H1 (cell line): ENCODE measurements at regions of chr11 and their contacts with region 1.

Region 1: GRCh38 chr11:118295834-118296454 is 8.6 kb upstream of the CD3E start:
- DNase-seq: no peak
- H3K4me3 ChIP-seq: no peak overlapping the region
- H3K27ac ChIP-seq: no peak overlapping the region
- H3K4me1 ChIP-seq: no peaks in the 10 kb centered on the region; a peak in 1 of 7 replicates
- H3K27me3 ChIP-seq: no peaks in the 10 kb centered on the region; a peak in 1 of 7 replicates
- CTCF ChIP-seq: peak in 2 of 3 experiments; percentile 63 to 70; a peak in 3 of 4 replicates
- EP300 ChIP-seq: no peak
- POLR2A ChIP-seq: no peak
- RAD21 ChIP-seq: peak; percentile 54 to 65

Region 2: GRCh38 chr11:118033443-118033842 is 262.5 kb before region 1 on chr11:
- CTCF ChIA-PET with region 1: no interaction called
- POLR2A ChIA-PET with region 1: no interaction called
- DNase-seq: no peak
- H3K4me3 ChIP-seq: no peak overlapping the region
- H3K27ac ChIP-seq: no peak overlapping the region
- H3K4me1 ChIP-seq: no peaks in the 10 kb centered on the region
- H3K27me3 ChIP-seq: no peaks in the 10 kb centered on the region
- CTCF ChIP-seq: no peak
- EP300 ChIP-seq: no peak
- POLR2A ChIP-seq: no peak
- RAD21 ChIP-seq: no peak

Region 3: DNA sequence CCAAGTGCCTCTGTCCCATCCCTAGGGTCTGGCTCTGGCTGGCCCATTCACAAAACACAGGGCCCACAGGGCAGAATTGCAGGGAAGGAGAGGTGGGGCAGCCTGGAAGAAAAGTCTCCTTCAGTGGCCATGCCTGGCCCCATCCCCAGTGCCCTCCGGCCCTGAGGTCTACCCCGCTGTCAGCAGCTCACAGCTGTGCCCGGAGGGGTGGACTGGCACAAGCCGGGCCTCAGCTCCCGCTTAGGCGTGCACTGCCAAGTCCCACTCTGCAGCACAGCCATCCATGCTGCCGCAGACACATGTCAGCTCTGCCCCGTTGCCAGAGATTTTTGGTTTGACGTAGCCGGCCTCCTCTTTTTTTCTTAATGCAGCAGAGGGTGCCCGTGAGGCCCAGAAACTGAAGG is 115.6 kb before region 1 on chr11:
- CTCF ChIA-PET with region 1: interaction called, 10 read pairs
- POLR2A ChIA-PET with region 1: no interaction called
- DNase-seq: peak in 1 of 2 experiments; percentile 77
- H3K4me3 ChIP-seq: peak overlapping the region in 3 of 4 experiments; percentile 8 to 42 (median 10); a peak in 5 of 8 replicates
- H3K27ac ChIP-seq: no peak overlapping the region
- H3K4me1 ChIP-seq: peaks cover 7 to 21% (median 11%) of the 10 kb centered on the region in 4 experiments
- H3K27me3 ChIP-seq: peaks cover 0 to 8% (median 7%) of the 10 kb centered on the region in 4 experiments; a peak in 5 of 7 replicates
- CTCF ChIP-seq: peak in 2 of 3 experiments; percentile 8; a peak in 2 of 4 replicates
- EP300 ChIP-seq: no peak
- POLR2A ChIP-seq: no peak
- RAD21 ChIP-seq: peak; percentile 11 to 19; a peak in 1 of 4 replicates

Region 4: GRCh38 chr11:118258410-118258809 is 37.5 kb before region 1 on chr11:
- CTCF ChIA-PET with region 1: interaction called, 16 read pairs
- POLR2A ChIA-PET with region 1: no interaction called
- DNase-seq: no peak
- H3K4me3 ChIP-seq: no peak overlapping the region
- H3K27ac ChIP-seq: no peak overlapping the region
- H3K4me1 ChIP-seq: peaks cover 0 to 2% (median 0%) of the 10 kb centered on the region in 4 experiments; a peak in 3 of 7 replicates
- H3K27me3 ChIP-seq: peaks cover 1 to 11% (median 8%) of the 10 kb centered on the region in 4 experiments; a peak in 6 of 7 replicates
- CTCF ChIP-seq: peak in 2 of 3 experiments; percentile 11 to 41; a peak in 2 of 4 replicates
- EP300 ChIP-seq: no peak
- POLR2A ChIP-seq: no peak
- RAD21 ChIP-seq: peak; percentile 24 to 40

Region 5: DNA sequence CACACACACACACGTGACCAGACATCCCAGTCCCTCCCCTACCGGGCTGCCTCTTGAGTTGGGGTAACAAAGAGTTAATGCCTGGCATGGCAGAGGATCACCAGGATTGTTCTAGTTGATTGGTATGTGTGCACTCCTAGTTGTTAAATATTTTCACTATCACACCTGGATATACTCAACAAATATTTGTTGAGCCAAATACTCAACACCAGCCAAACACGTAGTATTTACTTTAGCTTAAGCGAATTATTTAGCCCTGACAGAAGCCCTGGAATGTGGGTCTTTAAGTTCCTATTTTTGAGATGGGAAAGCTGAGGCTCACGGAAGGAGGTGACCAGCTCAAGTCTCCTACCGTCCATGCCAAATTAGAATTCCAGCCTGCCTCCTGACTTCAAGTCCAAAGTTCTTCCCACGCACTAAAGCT is 19.1 kb after region 1 on chr11:
- CTCF ChIA-PET with region 1: interaction called, 11 read pairs
- POLR2A ChIA-PET with region 1: interaction called, 3 read pairs
- DNase-seq: no peak
- H3K4me3 ChIP-seq: peak overlapping the region in 3 of 4 experiments; percentile 16 to 48 (median 28); a peak in 5 of 8 replicates
- H3K27ac ChIP-seq: no peak overlapping the region
- H3K4me1 ChIP-seq: peaks cover 7 to 11% (median 7%) of the 10 kb centered on the region in 4 experiments
- H3K27me3 ChIP-seq: peaks cover 0 to 4% (median 0%) of the 10 kb centered on the region in 4 experiments; a peak in 2 of 7 replicates
- CTCF ChIP-seq: no peak
- EP300 ChIP-seq: no peak
- POLR2A ChIP-seq: no peak
- RAD21 ChIP-seq: no peak

Region 6: DNA sequence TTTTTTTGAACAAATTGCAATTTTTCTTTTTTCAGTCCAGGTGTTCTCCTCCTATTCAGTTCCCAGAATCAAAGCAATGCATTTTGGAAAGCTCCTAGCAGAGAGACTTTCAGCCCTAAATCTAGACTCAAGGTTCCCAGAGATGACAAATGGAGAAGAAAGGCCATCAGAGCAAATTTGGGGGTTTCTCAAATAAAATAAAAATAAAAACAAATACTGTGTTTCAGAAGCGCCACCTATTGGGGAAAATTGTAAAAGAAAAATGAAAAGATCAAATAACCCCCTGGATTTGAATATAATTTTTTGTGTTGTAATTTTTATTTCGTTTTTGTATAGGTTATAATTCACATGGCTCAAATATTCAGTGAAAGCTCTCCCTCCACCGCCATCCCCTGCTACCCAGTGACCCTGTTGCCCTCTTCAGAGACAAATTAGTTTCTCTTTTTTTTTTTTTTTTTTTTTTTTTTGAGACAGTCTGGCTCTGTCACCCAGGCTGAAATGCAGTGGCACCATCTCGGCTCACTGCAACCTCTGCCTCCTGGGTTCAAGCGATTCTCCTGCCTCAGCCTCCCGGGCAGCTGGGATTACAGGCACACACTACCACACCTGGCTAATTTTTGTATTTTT is 57.3 kb after region 1 on chr11:
- CTCF ChIA-PET with region 1: interaction called, 52 read pairs
- POLR2A ChIA-PET with region 1: interaction called, 4 read pairs
- DNase-seq: no peak
- H3K4me3 ChIP-seq: no peak overlapping the region
- H3K27ac ChIP-seq: no peak overlapping the region
- H3K4me1 ChIP-seq: no peaks in the 10 kb centered on the region
- H3K27me3 ChIP-seq: peaks cover 0 to 3% (median 1%) of the 10 kb centered on the region in 4 experiments; a peak in 2 of 7 replicates
- CTCF ChIP-seq: peak in 1 of 3 experiments; percentile 13; a peak in 2 of 4 replicates
- EP300 ChIP-seq: no peak
- POLR2A ChIP-seq: no peak
- RAD21 ChIP-seq: peak in 1 of 2 experiments; percentile 28

Region 7: DNA sequence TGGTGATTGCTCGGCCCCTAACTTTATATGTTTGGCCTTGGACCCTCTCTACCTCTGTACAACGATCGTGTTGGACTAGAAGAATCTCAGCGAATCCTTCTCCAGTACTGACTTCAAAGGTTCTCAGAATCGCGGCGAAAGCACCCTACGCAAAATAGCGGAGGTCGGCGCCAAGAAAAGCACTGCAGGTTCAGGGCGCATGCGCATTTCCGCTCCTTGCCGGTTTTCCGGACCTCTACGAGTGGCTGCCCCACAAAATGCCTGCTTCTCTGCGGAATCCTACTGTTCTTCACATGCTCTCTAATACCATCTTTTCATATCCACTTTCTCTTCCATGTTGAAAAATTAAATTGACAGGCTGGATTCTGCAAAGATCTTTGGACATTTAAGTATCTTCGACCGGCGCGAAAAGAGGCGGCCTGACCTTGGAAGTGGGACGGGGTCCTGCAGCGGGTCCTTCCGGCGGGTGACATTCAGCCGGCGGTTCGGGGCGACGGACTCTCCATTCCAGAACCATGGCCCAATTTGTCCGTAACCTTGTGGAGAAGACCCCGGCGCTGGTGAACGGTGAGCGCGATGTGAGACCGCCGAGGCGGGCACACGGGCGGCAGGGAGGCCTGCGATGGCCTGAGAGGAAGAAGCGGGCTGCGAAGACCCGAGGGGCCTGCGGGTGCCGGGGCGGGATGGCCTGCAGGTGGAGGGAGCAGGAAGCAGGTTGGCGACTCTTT is 105.4 kb after region 1 on chr11 and contains the start of gene ATP5MG:
- CTCF ChIA-PET with region 1: no interaction called
- POLR2A ChIA-PET with region 1: no interaction called
- DNase-seq: peak; percentile 72 to 90
- H3K4me3 ChIP-seq: peak within 1 kb of the TSS; percentile 81 to 95 (median 92)
- H3K27ac ChIP-seq: peak within 1 kb of the TSS; percentile 88
- H3K4me1 ChIP-seq: peaks cover 0 to 6% (median 0%) of the 10 kb centered on the region in 4 experiments; a peak in 2 of 7 replicates
- H3K27me3 ChIP-seq: no peaks in the 10 kb centered on the region
- CTCF ChIP-seq: no peak
- EP300 ChIP-seq: no peak
- POLR2A ChIP-seq: peak; percentile 67 to 78; a peak in 2 of 3 replicates
- RAD21 ChIP-seq: no peak
- total RNA-seq, gene ATP5MG: 237 and 251 TPM in 2 replicates